ENCODE measurements at regions of chr19 and their contacts with region 1.

Region 1: DNA sequence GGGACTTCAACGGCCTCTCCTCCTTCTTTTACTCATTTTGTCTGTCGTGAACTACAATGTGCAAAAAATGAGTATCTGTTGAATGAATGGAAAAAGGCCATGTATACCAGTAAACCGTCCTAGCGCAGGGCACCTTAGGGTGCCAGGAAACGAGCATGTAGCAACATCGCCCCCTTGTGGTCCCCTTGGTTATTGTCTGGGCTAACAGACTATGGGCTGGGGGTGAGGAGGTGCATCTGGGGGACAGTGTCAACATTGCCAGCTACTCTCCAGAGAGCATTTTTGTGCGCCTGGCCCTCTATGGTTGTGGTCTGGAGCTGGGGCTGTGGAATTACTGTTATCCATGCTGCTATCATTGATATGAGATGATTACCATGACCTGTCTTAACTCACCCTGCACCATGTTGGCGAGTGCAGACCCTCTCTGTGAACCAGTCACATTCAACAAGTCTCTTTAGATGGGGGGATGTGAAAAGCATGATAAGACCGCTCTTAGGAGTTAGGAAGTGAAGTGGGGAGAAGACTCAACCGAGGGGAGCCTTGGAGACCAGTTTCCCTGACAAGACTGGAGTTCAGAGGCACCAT is 22.8 kb upstream of the SIGLEC11 start:
- DNase-seq: peak; percentile 41
- ATAC-seq: peak in 7 of 8 donors; percentile 16 to 63 (median 55)
- H3K4me3 ChIP-seq: no peak overlapping the region
- H3K27ac ChIP-seq: no peak overlapping the region
- H3K4me1 ChIP-seq: no peaks in the 10 kb centered on the region
- H3K27me3 ChIP-seq: no peaks in the 10 kb centered on the region
- CTCF ChIP-seq: peak; percentile 68 to 88 (median 80)

Region 2: GRCh38 chr19:49799621-49800376 is 183.9 kb before region 1 on chr19:
- intact Hi-C with region 1: no loop called
- DNase-seq: no peak
- ATAC-seq: no peak
- H3K4me3 ChIP-seq: no peak overlapping the region
- H3K27ac ChIP-seq: no peak overlapping the region
- H3K4me1 ChIP-seq: peaks cover 0 to 18% (median 5%) of the 10 kb centered on the region in 9 donors
- H3K27me3 ChIP-seq: no peaks in the 10 kb centered on the region
- CTCF ChIP-seq: peak in 2 of 9 donors; percentile 15 to 19

Region 3: GRCh38 chr19:49929611-49930482 is 53.9 kb before region 1 on chr19:
- intact Hi-C with region 1: loop called in 4 of 10 experiments (anchors 5 to 10 kb)
- DNase-seq: peak; percentile 90 to 96
- ATAC-seq: peak; percentile 92 to 96 (median 93)
- H3K4me3 ChIP-seq: peak overlapping the region; percentile 66 to 98 (median 94)
- H3K27ac ChIP-seq: peak overlapping the region; percentile 71 to 98 (median 95)
- H3K4me1 ChIP-seq: peaks cover 4 to 53% (median 24%) of the 10 kb centered on the region in 9 donors
- H3K27me3 ChIP-seq: no peaks in the 10 kb centered on the region
- CTCF ChIP-seq: no peak

Region 4: GRCh38 chr19:49937750-49938381 is 45.9 kb before region 1 on chr19:
- intact Hi-C with region 1: loop called (anchors 1 to 10 kb)
- DNase-seq: peak; percentile 71 to 82
- ATAC-seq: peak; percentile 79 to 95 (median 90)
- H3K4me3 ChIP-seq: peak overlapping the region in 6 of 10 donors; percentile 4 to 33 (median 21)
- H3K27ac ChIP-seq: no peak overlapping the region
- H3K4me1 ChIP-seq: peaks cover 0 to 14% (median 7%) of the 10 kb centered on the region in 9 donors
- H3K27me3 ChIP-seq: peaks cover 0 to 3% (median 0%) of the 10 kb centered on the region in 7 donors
- CTCF ChIP-seq: peak; percentile 89 to 98 (median 96)